ENCODE measurements at regions of chr7 and their contacts with region 1.

Region 1: GRCh38 chr7:44515590-44516268 is 25.3 kb upstream of the NUDCD3 start:
- DNase-seq: peak in 1 of 2 donors; percentile 64
- H3K4me3 ChIP-seq: no peak overlapping the region
- H3K27ac ChIP-seq: peak overlapping the region; percentile 39
- H3K4me1 ChIP-seq: no peaks in the 10 kb centered on the region
- H3K27me3 ChIP-seq: no peaks in the 10 kb centered on the region
- CTCF ChIP-seq: no peak
- POLR2A ChIP-seq: no peak

Region 2: DNA sequence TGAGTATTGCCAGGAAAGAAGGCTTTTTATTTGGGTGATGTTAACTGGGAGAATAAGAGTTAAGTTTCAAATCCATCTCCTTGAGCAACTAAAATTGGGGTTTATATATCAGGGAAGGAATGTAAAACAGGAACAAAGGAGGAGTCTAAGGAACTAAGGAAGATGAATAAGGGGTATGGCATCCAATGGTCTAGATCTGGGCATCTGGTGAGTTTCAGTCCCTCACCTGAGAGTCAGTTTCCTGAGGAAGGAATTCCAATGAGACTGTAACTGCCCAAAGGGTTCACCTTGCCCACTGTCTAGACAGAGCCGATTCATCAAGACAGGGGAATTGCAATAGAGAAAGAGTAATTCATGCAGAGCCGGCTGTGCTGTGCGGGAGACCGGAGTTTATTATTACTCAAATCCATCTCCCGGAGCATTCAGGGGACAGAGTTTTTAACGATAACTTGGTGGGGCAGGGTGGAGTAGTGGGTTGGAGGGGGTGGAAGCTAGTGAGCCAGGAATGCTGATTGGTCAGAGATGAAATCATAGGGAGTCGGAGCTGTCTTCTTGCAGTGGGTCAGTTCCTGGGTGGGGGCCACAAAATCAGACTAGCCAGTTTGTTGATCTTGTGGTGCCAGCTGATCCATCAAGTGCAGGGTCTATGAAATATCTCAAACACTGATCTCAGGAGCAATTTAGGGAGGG is 1121.1 kb before region 1 on chr7:
- intact Hi-C with region 1: loop called (anchors 5 kb)
- DNase-seq: no peak
- H3K4me3 ChIP-seq: no peak overlapping the region
- H3K27ac ChIP-seq: no peak overlapping the region
- H3K4me1 ChIP-seq: no peaks in the 10 kb centered on the region
- H3K27me3 ChIP-seq: no peaks in the 10 kb centered on the region
- CTCF ChIP-seq: no peak
- POLR2A ChIP-seq: no peak

Region 3: GRCh38 chr7:44693721-44694285 is 178.1 kb after region 1 on chr7:
- intact Hi-C with region 1: no loop called
- DNase-seq: no peak
- H3K4me3 ChIP-seq: no peak overlapping the region
- H3K27ac ChIP-seq: no peak overlapping the region
- H3K4me1 ChIP-seq: no peaks in the 10 kb centered on the region
- H3K27me3 ChIP-seq: no peaks in the 10 kb centered on the region
- CTCF ChIP-seq: no peak
- POLR2A ChIP-seq: no peak